Posterior vena cava (tissue), 2 donors: ENCODE measurements at regions of chr15 and their contacts with region 1.

Region 1: DNA sequence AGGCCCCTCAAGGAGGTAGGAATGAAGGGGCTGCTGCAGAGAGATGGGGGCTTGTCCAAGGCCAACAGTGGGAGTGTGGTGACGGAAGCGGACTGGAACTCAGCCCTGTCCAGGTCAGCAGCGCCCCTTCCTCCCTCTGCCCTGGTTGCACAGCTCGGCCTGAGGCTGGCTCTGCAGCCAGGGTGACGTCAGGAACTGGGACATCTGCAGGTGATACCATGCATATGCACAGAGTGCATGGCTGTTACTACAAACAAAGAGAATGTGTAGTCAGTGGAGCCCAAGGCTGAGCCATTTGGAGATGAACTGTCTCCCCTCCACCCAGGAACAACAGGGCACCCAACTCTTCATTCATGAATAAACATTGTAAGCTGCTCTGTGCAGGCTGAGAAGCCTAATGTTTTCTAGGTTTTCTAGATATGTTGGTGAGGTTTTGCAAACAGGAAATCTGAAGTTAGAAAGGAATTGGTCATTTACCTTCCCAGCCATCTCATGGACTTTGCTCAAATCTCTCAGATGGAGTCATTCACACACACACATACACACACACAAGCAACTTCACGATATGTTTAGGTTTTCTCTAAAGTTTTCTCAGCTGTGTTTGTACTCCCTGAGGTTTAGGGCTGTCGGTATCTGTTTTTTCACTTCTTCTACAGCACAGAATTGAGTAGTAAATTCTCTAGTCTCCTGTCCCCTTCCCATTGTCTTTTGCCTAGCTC is 117.2 kb downstream of the TLE3 start:
- DNase-seq: no peak

Region 2: DNA sequence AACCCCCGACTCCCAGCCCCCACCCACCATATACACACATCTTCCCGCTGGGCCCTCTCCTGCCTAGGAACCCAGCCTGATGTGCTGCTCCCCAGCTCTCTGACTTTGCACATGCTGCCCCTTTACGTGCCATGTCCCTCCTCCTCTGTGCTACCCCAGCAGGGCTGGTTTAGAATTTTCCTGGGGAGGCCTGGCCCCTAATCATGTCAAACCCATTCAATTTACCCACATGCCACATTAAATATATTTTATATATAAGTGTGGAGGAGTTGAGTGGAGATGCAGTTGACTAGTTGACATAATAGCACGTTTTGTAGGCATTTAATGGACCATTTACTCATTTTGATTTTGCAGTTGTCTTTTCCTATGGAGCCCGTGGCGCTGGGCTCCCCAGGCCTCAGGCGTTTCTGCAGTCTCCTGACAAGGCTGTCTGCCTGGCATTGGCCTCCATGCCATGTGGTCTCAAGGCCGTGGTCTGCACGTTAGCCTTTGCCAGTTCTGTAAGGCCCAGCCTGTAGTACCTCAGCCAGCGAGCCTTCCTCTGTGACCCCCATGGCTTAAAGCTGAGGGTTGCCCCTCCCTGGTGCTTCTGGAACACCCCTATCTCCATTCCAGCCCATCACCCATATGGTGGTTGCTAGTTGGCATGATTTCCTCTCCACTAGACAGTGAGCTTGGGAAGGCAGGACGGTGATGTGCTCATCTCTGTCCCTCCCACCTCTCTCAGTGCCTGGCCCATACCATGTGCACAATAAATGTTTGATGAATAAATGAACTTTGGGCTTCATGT is 38.6 kb before region 1 on chr15:
- intact Hi-C with region 1: loop called in 1 of 2 experiments (anchors 1 kb)
- DNase-seq: no peak